ENCODE measurements at regions of chr13 and their contacts with region 1.

Region 1: DNA sequence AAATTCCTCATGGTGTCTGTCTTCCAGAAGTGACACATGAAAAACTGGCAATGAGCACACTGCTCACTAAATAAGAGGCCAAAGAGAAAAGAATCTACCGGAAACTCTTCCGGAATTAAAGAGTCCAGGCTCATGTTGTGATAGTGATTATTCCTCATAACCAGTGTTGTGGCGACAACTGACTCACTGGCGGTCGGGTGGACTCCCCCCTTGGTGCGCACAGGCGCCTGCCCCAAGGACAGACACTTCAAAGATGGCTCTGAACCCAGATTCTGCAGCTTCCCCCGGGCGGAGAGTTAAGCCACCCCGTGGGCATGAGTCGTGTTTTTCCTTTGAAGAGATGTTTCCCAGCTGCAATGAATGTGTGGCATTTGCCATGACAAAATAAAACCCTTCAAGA is 10.3 kb downstream of the IL17D start:
- DNase-seq: no peak
- H3K4me3 ChIP-seq: no peak overlapping the region
- H3K27ac ChIP-seq: peak overlapping the region in 3 of 4 donors; percentile 49 to 84 (median 81)
- H3K4me1 ChIP-seq: peaks cover 8 to 39% (median 27%) of the 10 kb centered on the region in 3 donors
- H3K27me3 ChIP-seq: peaks cover 0 to 21% (median 0%) of the 10 kb centered on the region in 4 donors
- CTCF ChIP-seq: no peak
- POLR2A ChIP-seq: no peak

Region 2: DNA sequence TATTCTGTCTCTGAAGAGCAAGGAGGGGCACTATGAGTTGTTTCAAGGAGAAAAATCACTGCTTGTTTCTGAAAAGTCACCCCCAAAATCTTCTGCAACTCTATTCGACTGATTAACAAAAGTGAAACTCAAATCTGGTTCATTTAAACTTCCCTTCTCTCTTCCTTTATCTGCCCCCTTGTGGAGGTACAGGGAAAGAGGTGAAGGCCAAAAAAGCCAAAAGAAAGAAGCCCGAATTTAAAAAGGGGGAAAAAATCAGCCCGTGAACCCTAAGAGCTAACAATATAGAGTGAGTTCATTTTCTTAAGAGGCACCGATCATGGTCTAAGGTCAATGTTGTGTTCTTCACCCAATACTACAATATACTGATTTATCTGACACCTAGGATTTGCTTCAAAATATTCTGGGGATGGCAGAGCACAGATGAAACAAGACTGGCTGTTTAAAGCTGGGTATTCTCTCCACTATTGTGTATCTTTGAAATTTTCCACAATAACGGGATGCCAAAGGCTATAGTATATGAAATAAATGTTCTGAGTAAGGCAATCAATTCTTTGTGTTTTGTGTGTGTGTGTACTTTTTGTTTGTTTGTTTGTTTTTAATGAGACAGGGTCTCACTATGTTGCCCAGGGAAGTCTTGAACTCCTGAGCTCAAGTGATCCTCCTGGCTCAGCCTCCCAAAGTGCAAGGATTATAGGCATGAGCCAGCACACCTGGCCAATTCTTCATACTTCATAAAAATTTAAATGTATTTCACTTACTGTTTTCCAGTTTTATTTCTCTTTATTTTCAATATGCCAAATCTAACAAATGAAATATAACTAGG is 115.0 kb after region 1 on chr13:
- intact Hi-C with region 1: loop called (anchors 10 kb)
- DNase-seq: no peak
- H3K4me3 ChIP-seq: peak overlapping the region in 2 of 4 donors; percentile 11 to 37
- H3K27ac ChIP-seq: peak overlapping the region; percentile 2 to 68 (median 50)
- H3K4me1 ChIP-seq: peaks cover 0 to 14% (median 0%) of the 10 kb centered on the region in 3 donors
- H3K27me3 ChIP-seq: no peaks in the 10 kb centered on the region
- CTCF ChIP-seq: peak; percentile 67 to 82 (median 79)
- POLR2A ChIP-seq: no peak

Region 3: GRCh38 chr13:20924758-20925394 is 211.1 kb after region 1 on chr13:
- intact Hi-C with region 1: loop called (anchors 10 kb)
- DNase-seq: peak; percentile 9
- H3K4me3 ChIP-seq: no peak overlapping the region
- H3K27ac ChIP-seq: no peak overlapping the region
- H3K4me1 ChIP-seq: no peaks in the 10 kb centered on the region
- H3K27me3 ChIP-seq: no peaks in the 10 kb centered on the region
- CTCF ChIP-seq: peak; percentile 19 to 75 (median 57)
- POLR2A ChIP-seq: no peak